Dendritic cell treated with granulocyte-macrophage colony-stimulating factor and Interleukin-4, amounts not matched to agents 40 ng/mL and 50 ng/mL, for 4 days (primary cell): ENCODE measurements at regions of chr2 and their contacts with region 1.

Region 1: DNA sequence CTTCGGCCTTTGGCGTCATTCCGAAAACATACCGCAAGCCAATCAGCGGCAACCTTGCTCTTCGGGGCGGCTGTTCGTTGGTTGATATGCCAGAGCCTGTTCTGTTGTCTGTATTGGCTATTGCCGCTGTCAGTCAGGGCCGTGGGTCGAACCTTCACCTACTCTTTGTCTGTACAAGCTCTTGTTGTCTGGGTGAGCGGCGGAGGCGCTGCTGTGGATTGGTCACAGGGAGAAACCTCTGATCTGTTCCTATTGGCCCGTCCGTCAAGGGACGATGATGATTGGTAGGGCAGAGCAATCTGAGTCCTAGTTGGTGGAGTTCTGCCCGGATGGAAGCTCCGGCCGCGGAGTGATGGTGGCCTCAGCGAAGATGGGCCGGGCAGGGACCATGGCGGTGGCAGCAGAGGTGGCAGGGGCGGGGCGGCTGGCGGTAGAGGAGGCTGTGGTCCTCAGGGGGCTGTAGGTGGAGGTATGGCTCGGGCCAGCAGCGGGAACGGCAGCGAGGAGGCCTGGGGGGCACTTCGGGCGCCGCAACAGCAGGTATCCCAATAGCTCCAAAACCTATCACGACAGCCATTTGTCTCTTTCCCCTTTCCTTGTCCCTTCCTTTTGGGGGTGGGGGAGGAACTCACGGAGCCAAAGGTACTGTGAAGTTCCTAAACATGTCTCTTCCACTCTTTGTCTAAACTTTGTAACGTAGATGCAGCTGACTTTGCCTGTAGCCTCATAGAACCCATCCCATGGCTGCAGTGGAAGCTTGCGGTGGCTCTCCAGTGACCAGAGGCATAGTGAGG is at the start of gene WBP1:
- H3K4me3 Mint-ChIP-seq: peak within 1 kb of the TSS; percentile 85
- H3K27ac Mint-ChIP-seq: peak within 1 kb of the TSS; percentile 94
- H3K4me1 Mint-ChIP-seq: peaks cover 60% of the 10 kb centered on the region
- H3K27me3 Mint-ChIP-seq: no peaks in the 10 kb centered on the region

Region 2: GRCh38 chr2:74421221-74421870 is 37.0 kb before region 1 on chr2 and contains the starts of genes C2orf81 and WDR54:
- intact Hi-C with region 1: loop called (anchors 1 kb)
- H3K4me3 Mint-ChIP-seq: peak within 1 kb of the TSS; percentile 99
- H3K27ac Mint-ChIP-seq: peak within 1 kb of the TSS; percentile 71
- H3K4me1 Mint-ChIP-seq: peaks cover 41% of the 10 kb centered on the region
- H3K27me3 Mint-ChIP-seq: peaks cover 11% of the 10 kb centered on the region

Region 3: DNA sequence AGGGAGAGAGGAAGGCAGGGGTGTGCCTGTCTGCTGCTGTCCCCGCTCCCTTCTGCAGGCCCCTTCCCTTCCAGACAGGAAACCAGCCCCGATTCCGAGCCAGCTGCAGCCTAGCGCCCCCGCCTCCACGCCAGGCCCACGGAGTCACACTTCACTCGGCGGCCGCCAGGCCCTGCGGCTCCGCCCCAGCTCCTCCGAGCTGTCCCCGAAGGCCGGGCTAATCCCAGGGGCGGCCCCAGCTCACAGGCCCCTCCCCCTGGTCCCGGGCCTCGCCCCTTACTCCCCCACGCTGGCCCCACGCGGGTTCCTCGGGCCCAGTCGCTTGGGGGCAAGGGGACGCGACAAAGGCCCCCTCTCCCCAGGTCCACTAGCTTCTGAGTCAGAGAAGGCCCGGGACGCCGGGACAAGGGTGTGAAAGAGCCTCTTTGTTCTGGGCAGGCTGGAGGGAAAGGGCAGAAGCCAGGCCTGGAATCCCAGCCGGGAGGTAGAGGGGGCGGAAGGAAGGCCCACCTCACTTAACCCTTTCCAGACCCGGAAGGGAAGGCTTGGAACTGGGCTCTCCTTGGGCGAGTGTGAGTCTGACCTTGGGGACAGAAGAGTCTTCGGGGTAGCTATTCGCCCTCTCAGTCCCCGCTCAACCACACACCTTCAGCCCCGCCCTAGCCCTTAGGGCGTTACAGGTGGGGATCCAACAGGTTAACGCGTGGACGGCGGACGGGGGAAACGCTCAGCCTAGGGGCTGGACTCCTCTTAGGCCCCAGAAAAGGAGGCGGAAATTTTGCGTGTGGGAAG is 17.8 kb before region 1 on chr2:
- intact Hi-C with region 1: loop called (anchors 2 kb)
- H3K4me3 Mint-ChIP-seq: peak overlapping the region; percentile 62
- H3K27ac Mint-ChIP-seq: peak overlapping the region; percentile 61
- H3K4me1 Mint-ChIP-seq: peaks cover 77% of the 10 kb centered on the region
- H3K27me3 Mint-ChIP-seq: peaks cover 63% of the 10 kb centered on the region

Region 4: GRCh38 chr2:74472086-74472944 is 14.0 kb after region 1 on chr2 and contains the start of gene MRPL53:
- intact Hi-C with region 1: loop called (anchors 1 kb)
- H3K4me3 Mint-ChIP-seq: peak within 1 kb of the TSS; percentile 96
- H3K27ac Mint-ChIP-seq: peak within 1 kb of the TSS; percentile 97
- H3K4me1 Mint-ChIP-seq: peaks cover 37% of the 10 kb centered on the region
- H3K27me3 Mint-ChIP-seq: no peaks in the 10 kb centered on the region

Region 5: GRCh38 chr2:74507145-74507925 is 49.0 kb after region 1 on chr2 and contains the start of gene PCGF1:
- intact Hi-C with region 1: loop called (anchors 2 kb)
- H3K4me3 Mint-ChIP-seq: peak within 1 kb of the TSS; percentile 89
- H3K27ac Mint-ChIP-seq: peak within 1 kb of the TSS; percentile 95
- H3K4me1 Mint-ChIP-seq: peaks cover 55% of the 10 kb centered on the region
- H3K27me3 Mint-ChIP-seq: peaks cover 42% of the 10 kb centered on the region

Region 6: DNA sequence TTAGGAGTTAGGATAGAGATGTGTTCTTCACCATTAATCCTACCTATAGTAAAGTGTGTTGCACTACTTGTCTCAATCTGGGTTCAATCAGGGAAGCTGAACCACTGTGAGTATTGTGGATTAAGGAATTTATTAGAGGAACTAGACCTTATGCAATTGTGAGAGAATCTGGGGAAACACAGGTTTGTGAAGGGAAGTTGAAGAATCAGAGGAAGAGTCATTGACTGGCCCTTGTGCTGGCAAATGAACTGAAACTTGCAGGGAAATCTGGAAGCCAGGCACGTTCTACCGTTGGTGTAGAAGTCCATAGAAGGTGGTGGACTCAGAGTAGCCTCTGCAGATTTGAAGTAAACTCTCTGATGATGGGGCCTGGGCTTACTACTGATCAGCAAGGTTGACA is 330.9 kb after region 1 on chr2:
- intact Hi-C with region 1: no loop called
- H3K4me3 Mint-ChIP-seq: no peak overlapping the region
- H3K27ac Mint-ChIP-seq: peak overlapping the region; percentile 66
- H3K4me1 Mint-ChIP-seq: peaks cover 17% of the 10 kb centered on the region
- H3K27me3 Mint-ChIP-seq: peaks cover 2% of the 10 kb centered on the region

Region 7: GRCh38 chr2:74876081-74876886 is 418.0 kb after region 1 on chr2:
- intact Hi-C with region 1: no loop called
- H3K4me3 Mint-ChIP-seq: no peak overlapping the region
- H3K27ac Mint-ChIP-seq: peak overlapping the region; percentile 63
- H3K4me1 Mint-ChIP-seq: peaks cover 51% of the 10 kb centered on the region
- H3K27me3 Mint-ChIP-seq: no peaks in the 10 kb centered on the region